K562 (cell line): ENCODE measurements at regions of chr16 and their contacts with region 1.

Region 1: GRCh38 chr16:80526425-80527061 is 14.2 kb upstream of the DYNLRB2 start:
- DNase-seq: peak; percentile 47 to 71 (median 70)
- ATAC-seq: peak; percentile 87
- H3K4me3 ChIP-seq: no peak overlapping the region
- H3K27ac ChIP-seq: no peak overlapping the region
- H3K4me1 ChIP-seq: no peaks in the 10 kb centered on the region
- H3K27me3 ChIP-seq: peaks cover 0 to 3% of the 10 kb centered on the region in 2 experiments; a peak in 1 of 5 replicates
- CTCF ChIP-seq: peak; percentile 72 to 90 (median 82)
- EP300 ChIP-seq: no peak
- POLR2A ChIP-seq: no peak
- RAD21 ChIP-seq: peak; percentile 74 to 81

Region 2: DNA sequence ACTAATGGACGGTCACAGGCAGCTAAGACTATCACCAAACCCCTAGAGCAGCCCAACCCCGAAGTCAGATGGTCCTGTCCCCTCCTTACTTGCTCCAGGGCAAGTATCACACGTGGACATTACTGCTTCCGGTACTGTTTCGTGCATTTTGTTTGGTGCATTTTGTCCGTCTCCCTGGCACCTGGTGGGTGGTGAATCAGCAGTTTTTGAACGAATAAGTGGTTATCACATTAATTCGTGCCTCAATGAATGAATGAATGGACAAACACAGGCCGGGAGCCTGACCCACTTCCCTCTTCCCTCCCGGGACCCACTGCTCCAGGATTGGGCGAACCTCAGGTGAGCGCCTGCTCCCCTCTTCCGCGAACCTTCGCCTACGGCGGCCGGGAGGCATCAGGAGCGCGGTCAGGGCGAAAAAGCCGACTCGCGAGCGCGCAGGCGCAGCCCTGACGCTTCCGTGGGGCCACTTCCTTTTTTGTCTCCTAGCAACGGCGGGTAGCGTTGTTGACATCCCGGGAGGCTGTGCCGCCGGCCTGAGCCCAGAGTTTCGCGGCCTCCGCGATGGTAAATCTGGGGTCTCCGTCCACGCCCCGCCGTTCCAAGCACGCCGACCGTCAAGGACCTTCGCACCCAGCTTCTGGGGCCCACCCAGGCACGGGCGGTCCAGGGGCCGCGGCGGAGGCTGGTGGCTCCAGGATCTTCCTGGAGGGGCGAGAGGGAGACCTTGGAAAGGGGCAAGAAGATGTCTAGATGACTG is 14.2 kb after region 1 on chr16 and contains the start of gene DYNLRB2:
- CTCF ChIA-PET with region 1: no interaction called
- POLR2A ChIA-PET with region 1: no interaction called
- in situ Hi-C with region 1: no loop called
- intact Hi-C with region 1: no loop called
- DNase-seq: peak; percentile 80 to 89 (median 86)
- ATAC-seq: peak; percentile 99
- H3K4me3 ChIP-seq: peak within 1 kb of the TSS; percentile 28
- H3K27ac ChIP-seq: peak within 1 kb of the TSS; percentile 3; the same call in 1 of the 3 replicates
- H3K4me1 ChIP-seq: peaks cover 0 to 8% of the 10 kb centered on the region in 2 experiments; a peak in 2 of 5 replicates
- H3K27me3 ChIP-seq: no peaks in the 10 kb centered on the region
- CTCF ChIP-seq: no peak
- EP300 ChIP-seq: 0 out of 2 replicates have a peak, but pooled peaks have one; percentile 10
- POLR2A ChIP-seq: peak; percentile 60
- RAD21 ChIP-seq: no peak
- polyA plus RNA-seq, gene DYNLRB2: not detected

Region 3: DNA sequence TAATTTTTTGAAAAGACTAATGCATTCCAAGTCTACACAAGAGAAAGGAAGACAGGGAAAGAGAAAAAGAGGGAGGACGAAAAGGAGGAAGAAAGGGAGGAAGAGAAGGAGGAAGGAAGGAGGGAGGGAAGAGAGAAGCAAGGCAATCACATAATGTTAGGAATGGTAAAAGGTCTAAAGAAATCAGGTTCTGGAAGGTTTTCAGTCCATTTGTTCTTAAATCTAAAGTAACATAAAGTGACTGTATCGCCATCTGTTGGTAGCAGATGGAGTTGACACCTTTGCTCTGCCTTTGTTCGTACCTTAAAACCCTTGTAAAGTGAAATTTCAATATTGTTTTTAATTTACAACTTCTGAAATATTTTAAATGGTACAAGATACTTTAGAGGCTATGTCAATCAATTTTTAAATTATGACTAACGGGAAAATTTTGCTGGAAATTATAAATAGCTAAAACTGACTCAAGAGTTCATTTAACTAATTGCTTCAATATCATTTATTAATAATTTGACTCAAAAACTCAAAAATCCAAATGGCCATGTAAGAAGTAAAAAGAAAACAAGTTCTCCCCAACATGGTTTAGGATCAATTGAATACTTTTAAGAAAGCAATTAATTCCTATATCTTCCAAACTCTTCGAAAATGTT is 298.3 kb after region 1 on chr16:
- CTCF ChIA-PET with region 1: interaction called, 7 read pairs
- POLR2A ChIA-PET with region 1: no interaction called
- in situ Hi-C with region 1: no loop called
- intact Hi-C with region 1: loop called (anchors 1 kb)
- DNase-seq: peak; percentile 46 to 66 (median 46)
- ATAC-seq: peak; percentile 60; the same call in 2 of the 3 replicates
- H3K4me3 ChIP-seq: no peak overlapping the region
- H3K27ac ChIP-seq: no peak overlapping the region
- H3K4me1 ChIP-seq: no peaks in the 10 kb centered on the region
- H3K27me3 ChIP-seq: no peaks in the 10 kb centered on the region; a peak in 1 of 5 replicates
- CTCF ChIP-seq: peak; percentile 51 to 76 (median 65); a peak in 5 of 6 replicates
- EP300 ChIP-seq: no peak
- POLR2A ChIP-seq: no peak
- RAD21 ChIP-seq: peak; percentile 50 to 78

Region 4: DNA sequence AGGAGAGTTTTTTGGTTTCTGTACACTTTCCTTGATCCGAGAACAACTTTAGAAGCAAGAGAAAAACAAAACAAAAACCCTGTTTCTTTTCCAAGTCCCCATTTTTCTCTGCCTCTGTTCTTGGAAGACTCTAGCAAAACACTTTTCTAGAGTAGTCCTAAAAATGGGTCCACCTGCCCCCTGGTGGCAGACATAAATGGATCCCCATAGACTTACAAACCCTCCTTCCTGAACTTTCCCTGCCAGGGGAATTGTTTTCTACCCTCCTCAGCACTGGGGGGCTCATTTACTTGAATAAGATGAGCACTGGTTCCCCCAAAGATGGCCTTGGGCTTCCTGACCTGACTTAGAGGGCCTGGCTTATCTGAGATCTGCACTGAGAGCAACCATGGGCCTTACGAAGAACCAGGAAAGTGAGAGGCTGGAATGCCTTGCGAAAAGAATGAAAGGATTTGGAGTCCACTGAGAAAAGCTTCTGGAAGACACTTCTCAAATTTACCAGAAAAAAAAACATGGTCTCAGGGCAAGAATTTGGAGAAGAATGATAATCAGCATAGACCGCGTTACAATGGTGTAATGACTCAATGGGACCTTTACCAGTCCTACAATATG is 325.8 kb after region 1 on chr16:
- CTCF ChIA-PET with region 1: interaction called, 10 read pairs
- POLR2A ChIA-PET with region 1: no interaction called
- in situ Hi-C with region 1: no loop called
- intact Hi-C with region 1: no loop called
- DNase-seq: peak; percentile 37 to 53 (median 48)
- ATAC-seq: peak; percentile 81
- H3K4me3 ChIP-seq: no peak overlapping the region
- H3K27ac ChIP-seq: no peak overlapping the region
- H3K4me1 ChIP-seq: no peaks in the 10 kb centered on the region
- H3K27me3 ChIP-seq: no peaks in the 10 kb centered on the region
- CTCF ChIP-seq: peak; percentile 41 to 64 (median 56); a peak in 5 of 6 replicates
- EP300 ChIP-seq: no peak
- POLR2A ChIP-seq: no peak
- RAD21 ChIP-seq: peak in 1 of 2 experiments; percentile 39; a peak in 2 of 4 replicates

Region 5: DNA sequence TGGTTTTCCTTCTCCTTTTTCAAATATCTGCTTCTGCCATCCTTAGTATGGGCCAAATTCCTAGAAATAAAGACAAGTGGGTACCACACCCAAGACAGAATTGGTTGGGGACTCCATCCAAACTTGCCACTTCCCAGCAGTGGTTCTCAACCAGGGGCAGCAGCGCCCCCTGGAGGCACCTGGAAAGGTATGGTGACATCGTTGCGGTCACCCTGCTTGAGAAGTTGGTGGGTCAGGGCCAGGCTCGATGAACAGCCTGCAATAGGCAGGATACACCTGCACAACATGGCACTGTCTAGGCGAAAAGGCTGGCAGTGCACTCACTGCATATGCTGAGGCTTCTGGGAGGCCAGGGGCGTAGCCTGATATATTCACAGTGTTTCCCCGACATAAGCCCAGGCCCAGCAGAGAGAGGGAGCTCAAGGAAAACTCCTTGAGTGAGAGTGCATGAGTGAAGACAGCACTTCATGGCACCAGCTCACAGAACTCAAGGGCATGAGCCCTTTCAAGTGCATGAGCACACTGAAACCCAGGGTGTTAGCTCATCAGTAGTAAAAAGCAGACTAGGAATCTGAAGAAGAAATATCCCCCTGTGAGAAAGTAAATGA is 422.4 kb after region 1 on chr16:
- CTCF ChIA-PET with region 1: interaction called, 6 read pairs
- POLR2A ChIA-PET with region 1: no interaction called
- in situ Hi-C with region 1: no loop called
- intact Hi-C with region 1: loop called (anchors 1 kb)
- DNase-seq: peak; percentile 67 to 81 (median 73)
- ATAC-seq: peak; percentile 100
- H3K4me3 ChIP-seq: no peak overlapping the region
- H3K27ac ChIP-seq: no peak overlapping the region
- H3K4me1 ChIP-seq: no peaks in the 10 kb centered on the region; a peak in 1 of 5 replicates
- H3K27me3 ChIP-seq: peaks cover 20 to 22% of the 10 kb centered on the region in 2 experiments
- CTCF ChIP-seq: peak; percentile 83 to 96 (median 85)
- EP300 ChIP-seq: no peak
- POLR2A ChIP-seq: no peak
- RAD21 ChIP-seq: peak; percentile 15 to 72